Vagina (tissue), 2 donors: ENCODE measurements at regions of chr14 and their contacts with region 1.

Region 1: DNA sequence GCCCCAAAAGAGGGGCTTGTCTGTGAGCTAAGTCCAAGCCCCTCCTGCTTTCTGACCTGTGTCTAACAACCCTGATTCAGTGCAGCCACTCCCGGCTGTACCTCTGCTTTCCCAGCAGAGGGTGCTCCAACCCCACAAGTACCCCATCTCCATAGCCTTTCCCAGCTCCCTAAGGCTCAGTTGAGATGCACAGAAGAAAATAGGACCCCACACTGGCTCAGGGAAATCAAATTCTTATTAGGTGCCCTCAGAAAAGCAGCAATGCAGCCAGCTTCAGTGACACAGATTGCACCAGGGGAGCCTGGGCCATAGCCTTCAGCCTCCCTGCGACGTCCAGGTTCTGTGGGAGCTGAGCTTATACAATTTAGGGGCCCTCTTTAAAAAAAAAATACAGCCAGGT is 49.9 kb downstream of the LRRC74A start:
- DNase-seq: no peak
- H3K4me3 ChIP-seq: no peak overlapping the region
- H3K27ac ChIP-seq: no peak overlapping the region
- H3K4me1 ChIP-seq: no peaks in the 10 kb centered on the region
- H3K27me3 ChIP-seq: no peaks in the 10 kb centered on the region
- CTCF ChIP-seq: peak; percentile 89 to 92 (median 90)
- POLR2A ChIP-seq: no peak

Region 2: GRCh38 chr14:76985540-76986230 is 109.6 kb after region 1 on chr14:
- intact Hi-C with region 1: no loop called
- DNase-seq: no peak
- H3K4me3 ChIP-seq: no peak overlapping the region
- H3K27ac ChIP-seq: no peak overlapping the region
- H3K4me1 ChIP-seq: no peaks in the 10 kb centered on the region
- H3K27me3 ChIP-seq: no peaks in the 10 kb centered on the region
- CTCF ChIP-seq: no peak
- POLR2A ChIP-seq: no peak

Region 3: GRCh38 chr14:77067632-77068514 is 191.8 kb after region 1 on chr14:
- intact Hi-C with region 1: loop called (anchors 5 kb)
- DNase-seq: peak in 1 of 2 donors; percentile 67
- H3K4me3 ChIP-seq: no peak overlapping the region
- H3K27ac ChIP-seq: peak overlapping the region; percentile 71
- H3K4me1 ChIP-seq: peaks cover 14% of the 10 kb centered on the region
- H3K27me3 ChIP-seq: no peaks in the 10 kb centered on the region
- CTCF ChIP-seq: peak; percentile 73 to 93 (median 90)
- POLR2A ChIP-seq: no peak

Region 4: GRCh38 chr14:77314043-77314442 is 438.0 kb after region 1 on chr14:
- intact Hi-C with region 1: loop called (anchors 10 kb)
- DNase-seq: no peak
- H3K4me3 ChIP-seq: no peak overlapping the region
- H3K27ac ChIP-seq: peak overlapping the region; percentile 85
- H3K4me1 ChIP-seq: peaks cover 54% of the 10 kb centered on the region
- H3K27me3 ChIP-seq: no peaks in the 10 kb centered on the region
- CTCF ChIP-seq: no peak
- POLR2A ChIP-seq: no peak